GM12878 (cell line): ENCODE measurements at regions of chr9 and their contacts with region 1.

Region 1: GRCh38 chr9:75471549-75472114 is 383.3 kb downstream of the OSTF1 start:
- DNase-seq: no peak
- ATAC-seq: 0 out of 3 replicates have a peak, but pooled peaks have one; percentile 27
- H3K4me3 ChIP-seq: no peak overlapping the region
- H3K27ac ChIP-seq: no peak overlapping the region
- H3K4me1 ChIP-seq: no peaks in the 10 kb centered on the region
- H3K27me3 ChIP-seq: no peaks in the 10 kb centered on the region
- CTCF ChIP-seq: no peak
- EP300 ChIP-seq: no peak
- POLR2A ChIP-seq: no peak
- RAD21 ChIP-seq: no peak

Region 2: DNA sequence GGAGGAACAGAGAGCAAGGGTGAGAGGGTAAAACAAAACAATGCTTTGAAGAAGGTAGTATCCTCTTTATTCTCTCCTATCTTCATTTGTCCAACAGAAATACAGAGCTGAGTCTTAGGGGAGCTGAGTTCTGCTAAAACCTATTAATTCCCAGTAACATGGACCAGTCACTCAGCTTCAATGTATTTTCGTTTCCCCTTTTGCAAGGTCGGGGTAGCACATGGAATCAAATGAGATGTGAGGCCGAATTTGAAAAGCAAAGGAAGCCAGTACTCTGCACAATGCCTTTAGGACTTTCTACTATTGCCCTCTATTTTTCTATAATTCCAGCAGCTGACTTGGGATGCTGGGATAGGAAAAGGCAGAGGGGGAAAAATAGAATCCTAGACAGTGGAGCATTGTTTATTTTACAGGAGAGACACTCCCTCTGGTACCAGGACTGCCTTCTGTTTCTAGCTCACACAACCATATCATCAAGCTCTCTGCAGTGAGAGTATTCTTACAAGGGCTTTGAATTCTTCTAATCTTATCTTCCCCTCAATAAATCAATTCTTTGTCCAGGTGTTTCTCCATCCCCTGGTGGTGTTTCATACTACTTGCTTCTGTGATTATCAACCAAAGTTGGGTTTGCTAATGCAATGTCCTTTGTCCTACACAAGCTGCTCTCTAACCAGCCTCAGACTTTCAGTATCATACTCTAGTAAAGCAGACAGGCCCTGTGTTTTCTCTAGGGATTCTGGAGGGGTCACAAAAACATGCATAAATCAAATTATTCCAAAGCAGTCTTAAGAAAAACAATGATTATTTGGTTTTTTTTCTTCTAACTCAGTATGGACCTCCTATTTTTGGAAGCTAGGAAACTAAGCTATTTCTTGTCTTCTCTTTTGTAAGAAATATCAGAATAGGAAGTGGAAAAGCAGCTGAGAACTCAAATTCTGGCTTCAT is 41.8 kb before region 1 on chr9:
- CTCF ChIA-PET with region 1: no interaction called
- POLR2A ChIA-PET with region 1: no interaction called
- RAD21 ChIA-PET with region 1: no interaction called
- SMC1A ChIA-PET with region 1: no interaction called
- in situ Hi-C with region 1: no loop called
- intact Hi-C with region 1: loop called (anchors 5 kb)
- DNase-seq: no peak
- ATAC-seq: no peak
- H3K4me3 ChIP-seq: no peak overlapping the region
- H3K27ac ChIP-seq: no peak overlapping the region
- H3K4me1 ChIP-seq: no peaks in the 10 kb centered on the region
- H3K27me3 ChIP-seq: no peaks in the 10 kb centered on the region
- CTCF ChIP-seq: no peak
- EP300 ChIP-seq: no peak
- POLR2A ChIP-seq: no peak
- RAD21 ChIP-seq: no peak

Region 3: GRCh38 chr9:76023715-76024195 is 552.1 kb after region 1 on chr9:
- CTCF ChIA-PET with region 1: no interaction called
- POLR2A ChIA-PET with region 1: no interaction called
- RAD21 ChIA-PET with region 1: no interaction called
- SMC1A ChIA-PET with region 1: no interaction called
- in situ Hi-C with region 1: no loop called
- intact Hi-C with region 1: no loop called
- DNase-seq: no peak
- ATAC-seq: no peak
- H3K4me3 ChIP-seq: no peak overlapping the region
- H3K27ac ChIP-seq: no peak overlapping the region
- H3K4me1 ChIP-seq: no peaks in the 10 kb centered on the region
- H3K27me3 ChIP-seq: no peaks in the 10 kb centered on the region; a peak in 1 of 4 replicates
- CTCF ChIP-seq: no peak
- EP300 ChIP-seq: no peak
- POLR2A ChIP-seq: no peak
- RAD21 ChIP-seq: peak; percentile 26; the same call in 1 of the 2 replicates